ENCODE measurements at regions of chr2 and their contacts with region 1.

Region 1: DNA sequence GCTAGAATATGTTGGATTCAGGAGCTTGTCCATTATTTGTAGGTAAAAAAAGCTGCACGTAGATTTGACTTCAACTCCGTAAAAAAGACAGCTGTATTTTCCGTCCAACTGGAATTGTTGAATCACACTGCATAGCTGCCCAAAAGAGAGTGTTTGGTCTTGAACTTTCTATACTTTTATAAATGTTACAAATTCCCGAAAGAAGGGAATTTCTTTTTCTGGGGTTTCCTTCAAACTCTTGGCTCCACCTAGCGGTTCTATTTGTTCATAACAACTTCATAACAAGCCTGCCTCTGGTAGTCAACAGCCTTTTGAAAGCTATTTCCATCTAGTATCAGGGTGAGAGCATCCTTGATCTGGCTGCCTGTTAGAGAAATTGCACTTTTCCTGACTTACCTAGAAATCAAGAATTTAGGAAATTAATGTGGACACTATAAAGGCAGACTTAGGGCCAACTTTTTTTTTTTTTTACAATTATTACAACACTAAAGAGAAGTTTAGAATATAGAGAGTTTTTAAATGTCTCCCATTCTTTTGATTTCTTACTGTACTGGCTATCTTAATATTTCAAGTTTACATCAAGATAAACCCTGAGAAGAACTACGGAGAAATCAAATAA is 48.1 kb downstream of the TMEM185B start:
- H3K4me3 Mint-ChIP-seq: no peak overlapping the region
- H3K27ac Mint-ChIP-seq: no peak overlapping the region
- H3K4me1 Mint-ChIP-seq: peaks cover 7% of the 10 kb centered on the region
- H3K27me3 Mint-ChIP-seq: peaks cover 19% of the 10 kb centered on the region

Region 2: DNA sequence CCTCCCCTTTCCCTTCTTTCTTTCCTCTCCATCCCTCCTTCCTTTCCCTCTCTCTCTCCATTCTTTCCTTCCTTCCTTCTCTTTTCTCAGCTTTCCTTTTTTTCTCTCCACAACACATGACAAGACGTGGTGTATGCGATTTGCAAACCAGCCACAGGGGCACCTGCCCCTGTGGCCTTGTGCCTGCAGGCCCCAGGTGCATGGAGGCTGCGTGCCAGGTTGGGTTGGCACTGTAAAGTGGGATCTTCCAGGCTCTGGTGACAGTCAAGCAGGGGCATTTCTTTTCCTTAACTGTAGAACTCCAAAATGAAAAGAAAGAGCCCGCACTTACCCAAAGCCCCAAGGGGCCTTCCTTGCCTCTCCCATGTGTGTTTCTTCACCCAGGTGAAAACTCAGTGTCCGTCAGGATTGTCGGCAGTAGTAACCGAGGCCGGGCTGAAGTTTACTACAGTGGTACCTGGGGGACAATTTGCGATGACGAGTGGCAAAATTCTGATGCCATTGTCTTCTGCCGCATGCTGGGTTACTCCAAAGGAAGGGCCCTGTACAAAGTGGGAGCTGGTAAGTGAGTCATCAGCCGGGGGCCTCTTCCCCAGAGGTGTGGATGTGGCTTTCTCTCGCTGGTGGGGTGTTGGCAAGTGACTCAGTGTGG is 1182.2 kb before region 1 on chr2:
- intact Hi-C with region 1: no loop called
- H3K4me3 Mint-ChIP-seq: peak overlapping the region; percentile 23
- H3K27ac Mint-ChIP-seq: no peak overlapping the region
- H3K4me1 Mint-ChIP-seq: peaks cover 35% of the 10 kb centered on the region
- H3K27me3 Mint-ChIP-seq: peaks cover 30% of the 10 kb centered on the region

Region 3: DNA sequence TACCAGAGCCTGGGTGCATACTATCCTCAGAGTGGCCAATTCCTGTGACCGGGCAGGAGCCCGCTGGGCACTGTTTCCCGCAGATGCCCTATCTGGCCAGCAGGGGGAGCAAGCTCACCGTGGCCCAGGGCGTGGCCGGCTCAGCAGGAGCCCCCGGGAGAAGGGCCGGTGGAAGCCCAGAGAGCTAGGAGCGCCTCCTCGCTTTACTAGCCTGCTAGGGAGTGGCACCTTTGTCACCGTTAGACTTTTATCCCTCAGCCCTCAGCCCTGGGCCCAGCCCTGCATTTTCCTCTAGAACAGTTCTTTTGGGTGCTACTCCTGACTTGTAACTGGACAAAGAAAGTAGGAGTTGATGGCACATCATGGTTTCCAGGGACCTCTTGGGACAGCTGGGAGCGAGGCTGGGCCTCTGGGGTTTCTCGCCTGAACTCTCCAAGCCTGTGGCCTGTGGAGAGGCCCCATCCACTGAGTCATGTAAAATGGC is 472.1 kb before region 1 on chr2:
- intact Hi-C with region 1: loop called (anchors 1 kb)
- H3K4me3 Mint-ChIP-seq: no peak overlapping the region
- H3K27ac Mint-ChIP-seq: no peak overlapping the region
- H3K4me1 Mint-ChIP-seq: peaks cover 14% of the 10 kb centered on the region
- H3K27me3 Mint-ChIP-seq: peaks cover 2% of the 10 kb centered on the region

Region 4: GRCh38 chr2:119759451-119760236 is 415.4 kb before region 1 on chr2 and contains the start of gene PTPN4:
- intact Hi-C with region 1: loop called (anchors 2 kb)
- H3K4me3 Mint-ChIP-seq: peak within 1 kb of the TSS; percentile 85
- H3K27ac Mint-ChIP-seq: peak within 1 kb of the TSS; percentile 91
- H3K4me1 Mint-ChIP-seq: peaks cover 24% of the 10 kb centered on the region
- H3K27me3 Mint-ChIP-seq: no peaks in the 10 kb centered on the region

Region 5: DNA sequence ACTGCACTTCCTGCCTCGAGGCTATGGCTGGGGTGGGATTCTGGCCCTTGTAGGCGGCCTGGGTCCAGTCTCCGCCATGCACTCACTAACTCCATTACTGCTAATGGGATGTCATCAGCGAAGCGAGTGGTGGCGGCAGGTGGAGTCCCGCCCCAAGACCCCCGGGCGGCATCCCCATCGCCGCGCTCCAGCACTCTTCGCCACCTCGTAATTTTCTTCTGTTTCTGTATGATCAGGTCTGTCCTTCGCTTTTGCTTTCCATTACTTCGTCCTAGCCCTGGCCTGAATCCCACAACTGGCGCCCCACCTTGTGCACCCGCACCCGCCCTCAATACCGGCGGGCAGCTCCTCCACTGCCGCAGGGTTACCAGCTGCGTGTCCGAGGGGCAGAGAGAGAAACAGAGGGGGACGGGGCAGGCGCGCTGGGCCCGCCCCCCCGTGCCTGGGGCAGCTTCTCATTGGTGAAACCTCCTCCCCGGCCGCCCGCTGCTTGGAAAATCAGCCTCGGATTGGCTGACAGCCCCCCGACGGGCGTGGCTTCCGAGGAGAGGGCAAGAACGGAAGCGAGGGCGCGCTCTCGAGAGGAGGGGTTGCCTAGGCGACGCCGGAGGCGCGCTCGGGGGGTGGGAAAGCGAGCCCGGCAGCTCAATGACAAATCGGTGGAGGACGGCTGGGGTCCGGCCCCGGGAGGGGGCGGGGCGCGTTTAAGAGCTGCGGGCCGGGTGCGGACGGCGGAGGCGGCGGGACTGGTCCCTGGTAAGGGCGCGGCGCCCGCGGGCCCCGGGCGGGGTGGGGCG is 77.4 kb after region 1 on chr2 and contains the start of gene RALB:
- intact Hi-C with region 1: loop called (anchors 2 kb)
- H3K4me3 Mint-ChIP-seq: peak within 1 kb of the TSS; percentile 100
- H3K27ac Mint-ChIP-seq: peak within 1 kb of the TSS; percentile 95
- H3K4me1 Mint-ChIP-seq: peaks cover 50% of the 10 kb centered on the region
- H3K27me3 Mint-ChIP-seq: peaks cover 21% of the 10 kb centered on the region

Region 6: DNA sequence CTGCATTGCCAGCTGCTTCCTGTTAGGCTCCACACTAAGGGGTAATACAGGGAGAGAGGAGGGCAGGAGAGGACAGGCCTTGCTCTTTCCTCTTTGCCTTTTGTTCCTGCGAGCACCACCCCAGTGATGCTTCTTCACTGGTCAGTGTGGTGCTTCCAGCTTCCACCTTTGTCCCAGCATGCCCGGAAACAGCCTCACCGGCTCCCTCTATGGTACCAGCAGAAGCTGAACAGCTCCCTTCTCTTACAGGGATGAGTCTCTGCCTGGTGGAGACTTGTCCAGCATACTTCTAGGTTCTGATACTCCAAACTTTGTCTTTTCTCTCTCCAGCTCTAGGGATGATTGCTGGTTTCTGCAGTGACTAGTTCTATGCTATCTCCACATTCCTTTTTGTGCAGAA is 1993.7 kb after region 1 on chr2:
- intact Hi-C with region 1: no loop called
- H3K4me3 Mint-ChIP-seq: no peak overlapping the region
- H3K27ac Mint-ChIP-seq: no peak overlapping the region
- H3K4me1 Mint-ChIP-seq: no peaks in the 10 kb centered on the region
- H3K27me3 Mint-ChIP-seq: no peaks in the 10 kb centered on the region

Measured in dendritic cell treated with granulocyte-macrophage colony-stimulating factor and Interleukin-4, amounts not matched to agents 40 ng/mL and 50 ng/mL, for 4 days (primary cell).